Dendritic cell treated with granulocyte-macrophage colony-stimulating factor and Interleukin-4, amounts not matched to agents 40 ng/mL and 50 ng/mL, for 4 days (primary cell): ENCODE measurements at regions of chr1 and their contacts with region 1.

Region 1: GRCh38 chr1:147225193-147225730 is at the start of gene FMO5:
- H3K4me3 Mint-ChIP-seq: peak within 1 kb of the TSS; percentile 93
- H3K27ac Mint-ChIP-seq: peak within 1 kb of the TSS; percentile 99
- H3K4me1 Mint-ChIP-seq: peaks cover 32% of the 10 kb centered on the region
- H3K27me3 Mint-ChIP-seq: no peaks in the 10 kb centered on the region

Region 2: GRCh38 chr1:147156638-147157037 is 68.6 kb before region 1 on chr1:
- intact Hi-C with region 1: no loop called
- H3K4me3 Mint-ChIP-seq: no peak overlapping the region
- H3K27ac Mint-ChIP-seq: no peak overlapping the region
- H3K4me1 Mint-ChIP-seq: no peaks in the 10 kb centered on the region
- H3K27me3 Mint-ChIP-seq: no peaks in the 10 kb centered on the region

Region 3: DNA sequence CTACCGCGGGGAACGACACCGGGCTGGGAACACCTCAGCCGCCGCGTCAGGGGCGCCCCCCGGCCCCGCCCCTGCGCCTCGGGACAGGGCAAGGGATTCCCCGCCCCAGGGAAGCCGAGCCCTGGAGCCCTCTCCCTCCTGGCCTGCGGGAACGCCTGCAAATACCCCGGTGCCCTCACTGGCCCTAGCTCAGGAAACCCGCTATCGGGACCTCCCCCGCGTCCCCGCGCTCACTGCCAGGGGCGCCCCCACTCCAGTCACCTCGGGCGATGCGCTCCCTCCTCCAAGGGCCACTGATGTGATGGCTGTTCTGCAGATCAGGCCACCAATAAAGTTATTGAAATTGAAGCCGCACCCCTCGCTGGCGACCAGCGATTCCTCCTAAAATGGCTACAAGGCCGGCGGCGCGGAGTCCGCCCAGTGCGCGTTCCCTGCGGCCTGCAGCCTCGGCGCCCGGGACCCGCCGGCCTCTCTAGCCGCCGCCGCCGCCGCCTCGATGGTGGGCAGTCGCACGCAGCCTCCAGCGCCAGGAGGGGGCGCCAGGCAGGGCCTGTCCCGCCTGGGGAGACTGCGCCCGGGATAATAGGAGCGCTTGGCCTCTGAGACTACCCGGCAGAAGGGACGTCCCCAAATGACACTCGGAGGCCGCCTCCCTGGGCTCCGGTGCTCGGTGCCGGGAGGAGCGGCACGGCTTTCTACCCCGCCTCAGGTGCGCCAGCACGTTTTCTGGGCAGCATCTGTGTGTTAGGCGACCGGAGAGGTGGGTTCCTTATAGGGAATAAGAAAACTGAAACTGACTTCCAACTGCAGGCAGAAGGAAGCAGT is 52.9 kb before region 1 on chr1 and contains the start of gene PRKAB2:
- intact Hi-C with region 1: loop called (anchors 1 kb)
- H3K4me3 Mint-ChIP-seq: peak within 1 kb of the TSS; percentile 87
- H3K27ac Mint-ChIP-seq: peak within 1 kb of the TSS; percentile 96
- H3K4me1 Mint-ChIP-seq: peaks cover 34% of the 10 kb centered on the region
- H3K27me3 Mint-ChIP-seq: no peaks in the 10 kb centered on the region